Activated B cell treated with CpG ODN at 0.5 μM for 24 hours (primary cell): ENCODE measurements at regions of chr20 and their contacts with region 1.

Region 1: DNA sequence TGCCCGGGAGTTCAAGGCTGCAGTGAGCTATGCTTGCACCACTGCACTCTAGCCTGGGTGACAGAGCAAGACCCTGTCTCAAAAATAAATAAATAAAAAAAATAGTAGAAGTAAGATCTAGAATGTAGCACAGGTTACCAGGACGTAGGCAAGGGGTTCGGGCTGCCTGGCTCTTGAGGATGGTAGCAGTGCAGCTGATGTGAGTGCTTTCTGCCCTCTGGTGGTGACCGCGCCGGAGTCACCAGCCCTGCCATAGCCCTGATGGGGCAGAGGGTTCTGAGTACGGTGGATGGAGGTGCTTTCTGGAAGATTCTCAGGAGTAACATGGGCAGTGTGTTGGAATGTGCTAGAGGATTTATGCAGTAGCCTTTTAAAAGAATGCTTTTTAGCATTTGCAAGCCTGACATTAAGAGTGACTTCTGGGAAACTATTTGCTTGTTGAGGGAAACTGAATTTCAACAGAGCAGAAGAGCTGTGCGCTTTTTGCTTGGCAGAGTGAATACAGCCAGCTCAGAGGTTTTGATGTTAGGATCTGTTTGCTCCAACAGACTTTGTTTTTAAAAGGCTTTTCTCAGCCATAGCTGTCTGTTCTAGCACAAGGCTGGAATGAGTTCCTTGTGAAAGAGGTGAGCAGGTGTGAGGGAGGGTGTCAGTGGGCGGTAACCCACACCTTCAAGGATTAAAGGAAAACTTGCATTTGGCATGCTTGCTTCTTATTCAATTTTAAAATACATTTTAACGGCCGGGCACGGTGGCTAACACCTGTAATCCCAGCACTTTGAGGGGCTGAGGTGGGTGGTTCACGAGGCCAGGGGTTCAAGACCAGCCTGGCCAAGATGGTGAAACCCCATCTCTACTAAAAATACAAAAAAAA is 65.9 kb downstream of the PTPN1 start:
- DNase-seq: peak; percentile 52
- ATAC-seq: peak; percentile 84
- H3K4me3 Mint-ChIP-seq: no peak overlapping the region
- H3K27ac Mint-ChIP-seq: peak overlapping the region; percentile 77
- H3K4me1 Mint-ChIP-seq: peaks cover 55% of the 10 kb centered on the region
- H3K27me3 Mint-ChIP-seq: no peaks in the 10 kb centered on the region
- CTCF ChIP-seq: peak; percentile 48

Region 2: GRCh38 chr20:49901588-49901987 is 674.5 kb before region 1 on chr20:
- CTCF ChIA-PET with region 1: no interaction called
- POLR2A ChIA-PET with region 1: no interaction called
- intact Hi-C with region 1: no loop called
- DNase-seq: no peak
- ATAC-seq: no peak
- H3K4me3 Mint-ChIP-seq: no peak overlapping the region
- H3K27ac Mint-ChIP-seq: no peak overlapping the region
- H3K4me1 Mint-ChIP-seq: peaks cover 3% of the 10 kb centered on the region
- H3K27me3 Mint-ChIP-seq: no peaks in the 10 kb centered on the region
- CTCF ChIP-seq: no peak

Region 3: GRCh38 chr20:50380641-50381040 is 195.4 kb before region 1 on chr20:
- CTCF ChIA-PET with region 1: no interaction called
- POLR2A ChIA-PET with region 1: no interaction called
- intact Hi-C with region 1: no loop called
- DNase-seq: no peak
- ATAC-seq: no peak
- H3K4me3 Mint-ChIP-seq: no peak overlapping the region
- H3K27ac Mint-ChIP-seq: no peak overlapping the region
- H3K4me1 Mint-ChIP-seq: peaks cover 11% of the 10 kb centered on the region
- H3K27me3 Mint-ChIP-seq: peaks cover 25% of the 10 kb centered on the region
- CTCF ChIP-seq: no peak

Region 4: GRCh38 chr20:50478162-50479036 is 97.7 kb before region 1 on chr20:
- CTCF ChIA-PET with region 1: interaction called, 11 read pairs
- POLR2A ChIA-PET with region 1: interaction called, 5 read pairs
- intact Hi-C with region 1: loop called (anchors 1 kb)
- DNase-seq: peak; percentile 53
- ATAC-seq: peak; percentile 99
- H3K4me3 Mint-ChIP-seq: peak overlapping the region; percentile 1
- H3K27ac Mint-ChIP-seq: no peak overlapping the region
- H3K4me1 Mint-ChIP-seq: peaks cover 43% of the 10 kb centered on the region
- H3K27me3 Mint-ChIP-seq: no peaks in the 10 kb centered on the region
- CTCF ChIP-seq: peak; percentile 24

Region 5: DNA sequence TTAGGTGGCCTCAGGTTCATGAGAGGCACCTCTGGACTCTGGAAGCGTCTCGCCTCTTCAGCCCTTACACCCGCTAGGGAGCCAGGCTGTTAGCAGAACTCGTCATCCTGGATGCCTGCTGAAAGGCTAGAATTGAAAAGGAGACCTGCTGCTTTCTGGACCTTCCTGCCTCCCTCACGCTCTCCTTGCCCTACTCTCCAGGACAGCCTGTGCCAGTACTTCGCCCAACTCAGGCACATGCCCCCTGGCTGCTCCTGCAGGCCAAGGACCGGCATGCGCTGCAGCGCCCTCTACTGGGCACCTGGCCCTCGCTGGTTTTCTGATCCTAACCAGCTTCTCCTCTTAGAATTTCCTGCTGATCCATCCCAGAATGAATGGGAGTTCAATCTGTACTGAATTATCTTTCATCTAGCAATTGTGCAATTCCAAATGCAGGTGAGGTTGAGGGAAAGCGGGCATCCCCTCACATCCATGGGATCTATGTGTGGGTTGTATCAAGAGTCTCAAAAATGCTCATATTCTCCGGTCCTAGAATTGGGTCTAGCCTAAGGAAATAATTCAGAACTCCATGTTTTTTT is 12.0 kb after region 1 on chr20:
- CTCF ChIA-PET with region 1: interaction called, 39 read pairs
- POLR2A ChIA-PET with region 1: interaction called, 3 read pairs
- intact Hi-C with region 1: no loop called
- DNase-seq: peak; percentile 63
- ATAC-seq: peak; percentile 64
- H3K4me3 Mint-ChIP-seq: no peak overlapping the region
- H3K27ac Mint-ChIP-seq: peak overlapping the region; percentile 54
- H3K4me1 Mint-ChIP-seq: peaks cover 13% of the 10 kb centered on the region
- H3K27me3 Mint-ChIP-seq: no peaks in the 10 kb centered on the region
- CTCF ChIP-seq: peak; percentile 64

Region 6: DNA sequence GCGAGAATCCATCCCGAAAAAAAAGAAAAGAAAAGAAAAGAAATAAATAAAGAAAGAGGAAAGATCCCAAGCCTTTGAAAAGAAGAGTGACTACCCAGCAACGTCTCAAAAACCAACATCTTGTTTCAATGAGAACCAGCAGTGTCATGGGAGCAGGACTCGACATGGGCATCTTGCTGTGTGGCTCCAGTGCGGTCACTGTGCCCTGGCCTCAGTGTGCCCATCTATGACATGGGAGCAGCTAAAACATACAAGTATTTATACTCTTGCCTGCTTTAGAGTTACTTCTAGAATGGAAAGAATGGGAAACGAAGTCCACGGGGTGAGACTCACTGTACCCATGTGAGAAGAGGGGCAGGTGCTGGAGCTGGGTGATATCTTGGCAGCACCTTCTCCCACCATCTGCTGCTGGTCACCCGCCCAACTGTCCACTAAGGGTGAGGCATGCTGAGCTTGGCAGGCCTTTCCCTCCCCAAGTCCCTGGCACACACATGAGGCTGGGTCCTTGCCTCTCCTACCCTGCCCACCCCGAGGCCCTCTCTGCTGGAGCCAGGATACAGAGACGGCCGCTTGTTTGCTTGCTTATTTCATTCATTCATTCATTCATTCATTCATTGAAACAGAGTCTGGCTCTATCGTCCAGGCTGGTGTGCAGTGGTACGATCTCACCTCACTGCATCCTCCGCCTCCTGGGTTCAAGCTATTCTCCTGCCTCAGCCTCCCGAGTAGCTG is 37.5 kb after region 1 on chr20:
- CTCF ChIA-PET with region 1: no interaction called
- POLR2A ChIA-PET with region 1: no interaction called
- intact Hi-C with region 1: no loop called
- DNase-seq: no peak
- ATAC-seq: no peak
- H3K4me3 Mint-ChIP-seq: no peak overlapping the region
- H3K27ac Mint-ChIP-seq: no peak overlapping the region
- H3K4me1 Mint-ChIP-seq: no peaks in the 10 kb centered on the region
- H3K27me3 Mint-ChIP-seq: peaks cover 3% of the 10 kb centered on the region
- CTCF ChIP-seq: no peak

Region 7: DNA sequence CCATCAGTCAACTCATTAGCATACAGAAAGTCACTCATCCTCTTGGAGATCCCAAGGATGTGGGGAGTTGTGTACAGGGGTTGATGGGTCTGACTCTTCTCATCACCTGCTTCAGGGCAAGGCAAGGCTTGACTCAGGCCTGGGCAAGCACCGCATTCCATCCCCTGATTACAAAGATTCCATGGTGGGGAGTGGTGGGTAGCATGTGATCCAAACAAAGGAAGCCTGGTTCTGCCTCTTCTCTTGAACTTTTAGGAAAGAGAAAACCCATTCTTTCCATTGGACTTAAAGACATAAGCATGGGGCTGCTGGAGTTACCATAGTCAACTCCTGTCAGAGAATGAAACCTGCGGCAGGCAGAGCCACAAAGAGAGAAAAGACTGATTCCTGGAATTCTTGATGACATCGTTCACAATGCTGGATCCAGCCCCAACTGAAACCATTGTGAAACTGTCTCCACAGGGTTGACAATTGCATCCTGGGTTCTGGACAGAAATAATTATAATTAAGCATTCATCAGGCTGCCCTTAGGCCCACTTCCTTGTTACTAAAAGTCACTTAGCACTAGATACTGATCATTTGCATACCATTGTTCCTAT is 682.6 kb after region 1 on chr20:
- CTCF ChIA-PET with region 1: no interaction called
- POLR2A ChIA-PET with region 1: no interaction called
- intact Hi-C with region 1: no loop called
- DNase-seq: no peak
- ATAC-seq: no peak
- H3K4me3 Mint-ChIP-seq: no peak overlapping the region
- H3K27ac Mint-ChIP-seq: no peak overlapping the region
- H3K4me1 Mint-ChIP-seq: no peaks in the 10 kb centered on the region
- H3K27me3 Mint-ChIP-seq: peaks cover 21% of the 10 kb centered on the region
- CTCF ChIP-seq: no peak